Posterior vena cava (tissue), 2 donors: ENCODE measurements at regions of chr3 and their contacts with region 1.

Region 1: GRCh38 chr3:4841776-4842440 is 137.3 kb upstream of the BHLHE40 start:
- DNase-seq: no peak

Region 2: GRCh38 chr3:4139462-4140140 is 702.3 kb before region 1 on chr3:
- intact Hi-C with region 1: no loop called
- DNase-seq: no peak

Region 3: DNA sequence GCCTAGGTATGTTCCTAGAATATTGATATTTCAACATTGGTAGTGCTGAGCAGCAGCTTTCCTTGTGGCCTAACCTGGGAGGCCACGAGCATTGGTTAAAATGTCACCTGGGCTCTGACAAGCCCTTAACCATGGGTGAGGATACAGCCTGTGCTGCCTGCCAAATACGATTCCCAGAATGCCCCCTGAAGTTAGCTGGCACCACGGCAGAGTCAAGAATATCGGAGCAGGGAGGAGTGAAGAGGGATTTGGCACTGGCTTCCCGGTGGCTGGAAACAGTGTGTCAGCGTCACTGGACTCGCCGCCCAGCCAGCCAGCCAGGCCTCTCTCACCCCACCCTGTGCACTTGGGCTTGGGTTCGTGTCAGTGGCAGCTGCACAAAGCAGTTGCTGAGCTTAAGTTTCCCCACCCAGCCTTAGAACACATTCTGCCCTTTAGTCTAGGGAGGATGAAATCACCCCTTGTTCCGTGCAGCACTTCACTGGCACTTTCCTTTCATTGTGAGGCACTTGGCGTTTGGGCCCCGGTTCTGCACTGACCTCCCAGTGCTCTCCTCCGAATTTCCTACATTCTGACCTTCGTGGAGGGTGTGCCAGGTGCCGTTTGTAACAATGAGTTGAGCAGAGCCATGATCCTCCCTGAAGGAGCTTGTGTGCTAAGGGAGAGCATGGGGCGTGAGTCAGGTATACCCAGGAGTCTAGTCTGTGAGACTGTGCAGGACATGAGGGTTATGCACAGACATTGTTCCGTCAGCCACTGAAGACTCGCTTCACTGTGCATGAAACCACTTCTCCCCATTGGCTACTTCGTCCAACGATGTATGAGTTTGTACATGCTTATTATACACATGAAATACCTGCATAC is 15.4 kb before region 1 on chr3:
- intact Hi-C with region 1: no loop called
- DNase-seq: peak; percentile 97

Region 4: GRCh38 chr3:4865714-4866113 is 23.8 kb after region 1 on chr3:
- intact Hi-C with region 1: loop called in 1 of 2 experiments (anchors 1 kb)
- DNase-seq: no peak